ENCODE measurements at regions of chr16 and their contacts with region 1.

Region 1: GRCh38 chr16:30893744-30894539 is at the start of gene BCL7C:
- DNase-seq: peak; percentile 67 to 93
- ATAC-seq: peak; percentile 86 to 87
- H3K4me3 ChIP-seq: peak within 1 kb of the TSS; percentile 56
- H3K27ac ChIP-seq: peak within 1 kb of the TSS; percentile 79 to 95
- H3K4me1 ChIP-seq: peaks cover 34% of the 10 kb centered on the region
- CTCF ChIP-seq: peak; percentile 67
- EP300 ChIP-seq: no peak
- POLR2A ChIP-seq: peak; percentile 81
- RAD21 ChIP-seq: peak in 1 of 2 experiments; percentile 49; a peak in 2 of 5 replicates
- polyA plus RNA-seq, gene BCL7C: 9.5 and 10.8 TPM in 2 replicates

Region 2: DNA sequence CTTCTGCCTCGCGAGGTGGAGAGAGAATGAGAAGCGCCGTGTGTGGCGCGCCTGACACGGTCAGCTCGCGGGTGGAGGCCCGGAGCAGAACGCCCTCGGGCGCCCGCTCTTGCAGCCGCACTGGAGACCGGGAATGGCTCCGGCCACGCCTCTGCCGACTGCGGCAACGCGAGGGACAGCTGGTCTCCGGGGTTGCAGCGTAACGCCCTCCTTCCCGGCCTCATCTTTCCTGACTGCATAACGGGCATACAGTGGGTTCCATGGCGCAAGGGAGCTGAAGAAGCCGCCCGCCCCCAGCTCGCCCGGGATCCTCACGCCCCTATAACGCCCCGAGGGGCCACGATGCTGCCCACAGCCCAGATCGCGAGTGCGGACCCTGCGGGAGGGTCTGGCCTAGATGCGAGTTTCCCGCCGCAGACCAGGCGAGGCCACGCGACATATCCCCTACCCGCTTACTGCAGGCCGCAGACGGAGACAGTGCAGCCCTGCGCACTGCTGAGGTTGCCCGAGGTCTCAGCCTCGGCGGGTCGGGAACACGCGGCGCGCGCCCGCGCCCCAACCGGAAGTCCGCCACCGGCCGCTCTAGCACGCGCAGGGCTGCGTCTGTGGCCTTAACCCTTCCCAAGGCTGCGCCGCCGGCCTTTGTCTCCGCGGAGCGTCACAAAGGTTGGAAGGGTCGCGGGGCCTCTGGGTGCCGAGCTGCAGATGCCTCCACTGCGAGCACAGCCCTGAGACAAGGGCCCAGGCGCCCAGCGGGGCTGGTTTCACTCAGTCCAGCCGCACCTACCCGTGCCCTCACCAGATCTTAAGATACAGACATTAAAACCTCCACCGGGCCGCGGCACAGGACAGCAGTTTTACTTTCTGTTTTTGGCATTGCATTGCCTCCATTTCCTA is 18.9 kb before region 1 on chr16:
- CTCF ChIA-PET with region 1: interaction called, 4 read pairs
- POLR2A ChIA-PET with region 1: interaction called, 16 read pairs
- DNase-seq: peak; percentile 82 to 93
- ATAC-seq: peak; percentile 95 to 98
- H3K4me3 ChIP-seq: peak overlapping the region; percentile 71
- H3K27ac ChIP-seq: peak overlapping the region; percentile 90 to 96
- H3K4me1 ChIP-seq: peaks cover 13% of the 10 kb centered on the region; the same call in 2 of the 3 replicates
- CTCF ChIP-seq: no peak
- EP300 ChIP-seq: no peak
- POLR2A ChIP-seq: peak; percentile 99
- RAD21 ChIP-seq: peak in 1 of 2 experiments; percentile 29; a peak in 1 of 5 replicates

Measured in A549 (cell line).